Mammary epithelial cell (primary cell): ENCODE measurements at regions of chr1 and their contacts with region 1.

Region 1: GRCh38 chr1:186605762-186606350 is 74.4 kb downstream of the PTGS2 start:
- DNase-seq: peak; percentile 64
- H3K4me3 ChIP-seq: no peak overlapping the region
- H3K27ac ChIP-seq: no peak overlapping the region
- H3K4me1 ChIP-seq: no peaks in the 10 kb centered on the region
- H3K27me3 ChIP-seq: no peaks in the 10 kb centered on the region
- CTCF ChIP-seq: peak; percentile 91 to 94

Region 2: GRCh38 chr1:186482661-186483255 is 123.1 kb before region 1 on chr1:
- CTCF ChIA-PET with region 1: no interaction called
- dilution Hi-C with region 1: no loop called
- in situ Hi-C with region 1: no loop called
- intact Hi-C with region 1: loop called (anchors 1 kb)
- DNase-seq: peak; percentile 53
- H3K4me3 ChIP-seq: no peak overlapping the region
- H3K27ac ChIP-seq: no peak overlapping the region
- H3K4me1 ChIP-seq: no peaks in the 10 kb centered on the region
- H3K27me3 ChIP-seq: no peaks in the 10 kb centered on the region
- CTCF ChIP-seq: peak; percentile 98

Region 3: GRCh38 chr1:186763107-186763506 is 157.3 kb after region 1 on chr1:
- CTCF ChIA-PET with region 1: no interaction called
- dilution Hi-C with region 1: no loop called
- in situ Hi-C with region 1: no loop called
- intact Hi-C with region 1: loop called (anchors 2 kb)
- DNase-seq: peak; percentile 54
- H3K4me3 ChIP-seq: no peak overlapping the region
- H3K27ac ChIP-seq: no peak overlapping the region
- H3K4me1 ChIP-seq: no peaks in the 10 kb centered on the region
- H3K27me3 ChIP-seq: no peaks in the 10 kb centered on the region
- CTCF ChIP-seq: no peak

Region 4: GRCh38 chr1:186915555-186915954 is 309.7 kb after region 1 on chr1:
- CTCF ChIA-PET with region 1: no interaction called
- dilution Hi-C with region 1: no loop called
- in situ Hi-C with region 1: no loop called
- intact Hi-C with region 1: loop called (anchors 1 kb)
- DNase-seq: no peak
- H3K4me3 ChIP-seq: no peak overlapping the region
- H3K27ac ChIP-seq: no peak overlapping the region
- H3K4me1 ChIP-seq: no peaks in the 10 kb centered on the region
- H3K27me3 ChIP-seq: no peaks in the 10 kb centered on the region
- CTCF ChIP-seq: peak in 1 of 2 donors; percentile 30